Activated CD8-positive, alpha-beta T cell treated with anti-CD3 and anti-CD28 coated beads for 36 hours (primary cell): ENCODE measurements at regions of chr5 and their contacts with region 1.

Region 1: GRCh38 chr5:141412854-141413539 is at the start of gene PCDHGA10:
- DNase-seq: peak; percentile 75
- ATAC-seq: peak; percentile 78
- H3K4me3 Mint-ChIP-seq: peak within 1 kb of the TSS; percentile 73
- H3K27ac Mint-ChIP-seq: no peak within 1 kb of the TSS
- H3K4me1 Mint-ChIP-seq: peaks cover 13% of the 10 kb centered on the region
- H3K27me3 Mint-ChIP-seq: peaks cover 69% of the 10 kb centered on the region
- CTCF ChIP-seq: peak; percentile 79
- total RNA-seq, gene PCDHGA10: not detected

Region 2: GRCh38 chr5:141369994-141370848 is 42.8 kb before region 1 on chr5 and contains the start of gene PCDHGB3:
- CTCF ChIA-PET with region 1: interaction called, 23 read pairs
- POLR2A ChIA-PET with region 1: no interaction called
- intact Hi-C with region 1: no loop called
- DNase-seq: peak; percentile 48
- ATAC-seq: peak; percentile 74
- H3K4me3 Mint-ChIP-seq: peak within 1 kb of the TSS; percentile 58
- H3K27ac Mint-ChIP-seq: no peak within 1 kb of the TSS
- H3K4me1 Mint-ChIP-seq: peaks cover 2% of the 10 kb centered on the region
- H3K27me3 Mint-ChIP-seq: peaks cover 67% of the 10 kb centered on the region
- CTCF ChIP-seq: peak; percentile 27
- total RNA-seq, gene PCDHGB3: 0.07 to 0.16 TPM

Region 3: GRCh38 chr5:141430332-141431113 is 17.5 kb after region 1 on chr5 and contains the start of gene PCDHGA12:
- CTCF ChIA-PET with region 1: interaction called, 25 read pairs
- POLR2A ChIA-PET with region 1: no interaction called
- intact Hi-C with region 1: no loop called
- DNase-seq: peak; percentile 63
- ATAC-seq: peak; percentile 83
- H3K4me3 Mint-ChIP-seq: peak within 1 kb of the TSS; percentile 35
- H3K27ac Mint-ChIP-seq: no peak within 1 kb of the TSS
- H3K4me1 Mint-ChIP-seq: peaks cover 5% of the 10 kb centered on the region
- H3K27me3 Mint-ChIP-seq: peaks cover 58% of the 10 kb centered on the region
- CTCF ChIP-seq: peak; percentile 36
- total RNA-seq, gene PCDHGA12: not detected

Region 4: DNA sequence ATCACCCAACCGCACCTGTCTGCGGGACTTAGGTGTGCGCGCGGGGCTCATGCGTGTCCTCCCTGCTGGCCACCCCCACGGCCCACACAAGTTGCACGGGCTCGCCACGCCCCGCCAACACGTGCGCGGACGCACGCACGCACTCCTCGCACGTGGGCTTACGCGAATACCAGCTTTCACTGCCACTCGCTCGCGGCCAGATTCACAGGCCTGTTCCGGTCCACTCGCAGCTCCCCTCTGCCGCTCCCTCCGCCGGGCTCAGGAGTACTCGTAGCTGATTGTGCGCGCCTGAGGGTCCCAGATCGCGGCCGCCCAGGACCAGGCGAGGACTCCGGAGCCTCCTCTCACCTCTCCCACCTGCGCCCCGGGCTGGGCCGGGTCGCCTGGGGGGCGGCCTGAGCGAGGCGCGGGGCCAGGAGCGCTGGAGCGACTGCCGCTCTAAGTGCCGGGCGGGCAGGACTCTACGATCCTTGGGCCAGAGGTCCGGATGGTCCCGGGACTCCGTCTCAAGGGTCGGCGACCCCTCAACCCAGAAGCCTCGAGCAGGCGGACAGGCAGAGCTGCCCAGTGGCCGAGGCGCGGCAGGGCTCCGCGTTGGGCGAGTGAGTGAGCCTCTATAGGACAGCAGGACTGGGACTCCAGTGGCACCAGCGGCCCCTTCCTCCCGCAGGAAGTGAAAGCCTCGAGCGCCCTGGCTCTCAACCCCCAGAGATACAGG is 79.3 kb after region 1 on chr5:
- CTCF ChIA-PET with region 1: interaction called, 10 read pairs
- POLR2A ChIA-PET with region 1: no interaction called
- intact Hi-C with region 1: no loop called
- DNase-seq: peak; percentile 39
- ATAC-seq: peak; percentile 45
- H3K4me3 Mint-ChIP-seq: peak overlapping the region; percentile 68
- H3K27ac Mint-ChIP-seq: peak overlapping the region; percentile 25
- H3K4me1 Mint-ChIP-seq: peaks cover 8% of the 10 kb centered on the region
- H3K27me3 Mint-ChIP-seq: peaks cover 77% of the 10 kb centered on the region
- CTCF ChIP-seq: no peak

Region 5: GRCh38 chr5:141524604-141525597 is 111.9 kb after region 1 on chr5:
- CTCF ChIA-PET with region 1: interaction called, 25 read pairs
- POLR2A ChIA-PET with region 1: no interaction called
- intact Hi-C with region 1: no loop called
- DNase-seq: peak; percentile 54
- ATAC-seq: peak; percentile 72
- H3K4me3 Mint-ChIP-seq: no peak overlapping the region
- H3K27ac Mint-ChIP-seq: peak overlapping the region; percentile 56
- H3K4me1 Mint-ChIP-seq: peaks cover 44% of the 10 kb centered on the region
- H3K27me3 Mint-ChIP-seq: no peaks in the 10 kb centered on the region
- CTCF ChIP-seq: peak; percentile 99

Region 6: GRCh38 chr5:141934099-141934844 is 521.3 kb after region 1 on chr5:
- CTCF ChIA-PET with region 1: no interaction called
- POLR2A ChIA-PET with region 1: no interaction called
- intact Hi-C with region 1: no loop called
- DNase-seq: no peak
- ATAC-seq: no peak
- H3K4me3 Mint-ChIP-seq: no peak overlapping the region
- H3K27ac Mint-ChIP-seq: no peak overlapping the region
- H3K4me1 Mint-ChIP-seq: no peaks in the 10 kb centered on the region
- H3K27me3 Mint-ChIP-seq: no peaks in the 10 kb centered on the region
- CTCF ChIP-seq: no peak